IMR-90 (cell line): ENCODE measurements at regions of chr5 and their contacts with region 1.

Region 1: DNA sequence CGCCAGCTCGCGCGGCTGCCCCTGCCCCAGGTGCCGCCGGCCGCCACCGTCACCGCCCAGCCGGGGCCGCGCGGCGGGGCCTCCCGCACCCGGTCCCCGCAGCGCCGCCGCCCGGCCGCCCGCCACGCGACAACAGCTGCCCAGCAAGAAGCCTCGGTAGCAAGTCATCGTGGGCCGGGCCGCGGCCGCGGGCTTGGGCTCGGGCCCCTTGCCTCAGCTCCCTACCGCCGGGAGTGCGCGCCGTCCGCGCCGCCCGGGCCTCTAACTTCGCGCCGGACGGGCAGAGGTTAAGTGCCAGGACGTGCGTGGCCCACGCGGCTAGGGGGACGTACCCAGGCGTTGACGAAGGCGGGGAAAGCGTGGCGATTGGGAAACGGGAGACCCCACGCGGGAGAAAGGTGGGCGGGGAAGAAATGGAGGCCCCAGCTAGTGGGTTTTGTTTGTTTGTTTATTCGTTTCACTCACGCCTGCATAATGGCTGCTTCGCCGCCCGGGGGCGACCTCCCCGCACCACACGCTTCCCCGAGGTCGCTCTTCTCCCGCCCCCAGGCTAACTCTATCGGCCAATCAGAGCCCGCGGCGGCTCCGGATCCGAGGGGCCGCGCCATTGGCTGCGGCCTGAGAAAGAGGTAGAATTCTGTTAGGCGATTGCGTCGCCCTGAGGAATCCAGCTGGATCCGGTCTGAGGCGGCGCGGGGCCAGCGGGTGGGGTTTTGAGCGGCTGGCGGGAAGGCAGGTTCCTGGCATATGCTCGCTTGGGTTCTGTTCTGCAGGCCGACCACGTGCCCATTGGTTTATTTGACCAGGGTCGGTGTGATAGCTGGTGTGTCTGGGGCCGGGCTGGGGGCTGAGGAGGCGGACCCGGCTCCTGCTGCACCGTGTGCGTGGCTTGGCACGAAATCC is at the start of gene NADK2:
- DNase-seq: peak; percentile 92
- ATAC-seq: peak; percentile 86
- H3K4me3 ChIP-seq: peak within 1 kb of the TSS; percentile 85
- H3K27ac ChIP-seq: peak within 1 kb of the TSS; percentile 91
- H3K4me1 ChIP-seq: peaks cover 4% of the 10 kb centered on the region
- H3K27me3 ChIP-seq: no peaks in the 10 kb centered on the region
- CTCF ChIP-seq: peak; percentile 65
- POLR2A ChIP-seq: peak; percentile 81
- RAD21 ChIP-seq: peak; percentile 31; the same call in 1 of the 2 replicates
- total RNA-seq, gene NADK2: 17.4 and 21.1 TPM in 2 replicates

Region 2: DNA sequence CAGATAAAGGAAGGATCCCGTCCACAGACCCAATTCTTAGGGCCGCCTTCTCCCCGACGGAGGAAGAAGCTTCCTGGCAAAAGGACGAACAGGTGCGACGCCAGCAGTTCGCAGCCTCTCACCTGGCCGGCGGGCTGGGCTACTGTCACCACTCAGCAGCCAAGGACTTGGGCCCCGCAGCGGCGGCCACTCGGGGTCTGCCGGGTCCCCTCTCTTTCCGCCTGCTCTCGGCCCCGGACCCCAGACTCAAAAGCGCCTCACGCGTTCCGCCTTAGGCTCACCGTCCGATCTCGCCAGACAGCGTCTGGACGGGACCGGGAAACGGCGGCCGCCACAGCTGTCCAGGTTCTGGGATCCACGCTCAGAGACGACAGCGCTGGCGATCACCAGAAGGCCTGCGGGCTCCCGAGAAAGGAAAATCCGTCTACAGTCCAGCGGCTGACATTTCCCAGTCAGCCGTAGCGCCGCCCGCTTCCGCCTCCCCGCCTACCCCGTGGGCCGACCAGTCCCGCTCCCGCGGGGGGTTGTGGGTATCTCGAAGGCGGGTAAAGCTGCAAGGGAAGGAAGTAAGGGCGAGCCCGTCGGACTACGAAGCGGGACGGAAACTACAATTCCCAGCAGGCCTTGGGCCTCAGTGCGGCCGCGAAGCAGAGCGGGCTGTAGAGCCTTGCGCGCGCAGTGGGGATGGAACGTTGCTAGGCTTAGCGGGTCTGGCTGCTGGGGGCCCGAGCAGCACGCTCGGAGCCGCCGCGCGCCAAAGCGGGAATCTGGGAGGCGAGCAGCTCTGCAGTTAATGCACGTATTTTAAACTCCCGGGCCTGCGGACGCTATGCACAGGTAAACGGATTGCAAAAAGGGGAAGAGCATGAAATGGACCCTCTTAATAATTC is 90.2 kb before region 1 on chr5 and contains the starts of genes LMBRD2 and SKP2:
- CTCF ChIA-PET with region 1: interaction called, 3 read pairs
- POLR2A ChIA-PET with region 1: no interaction called
- dilution Hi-C with region 1: no loop called
- in situ Hi-C with region 1: no loop called
- intact Hi-C with region 1: loop called (anchors 2 kb)
- DNase-seq: peak; percentile 98
- ATAC-seq: peak; percentile 94
- H3K4me3 ChIP-seq: peak within 1 kb of the TSS; percentile 79
- H3K27ac ChIP-seq: peak within 1 kb of the TSS; percentile 87
- H3K4me1 ChIP-seq: peaks cover 14% of the 10 kb centered on the region
- H3K27me3 ChIP-seq: no peaks in the 10 kb centered on the region
- CTCF ChIP-seq: no peak
- POLR2A ChIP-seq: peak; percentile 28; the same call in 1 of the 2 replicates
- RAD21 ChIP-seq: no peak
- total RNA-seq, gene LMBRD2: 5.2 and 11.4 TPM in 2 replicates
- total RNA-seq, gene SKP2: 72.5 and 92.1 TPM in 2 replicates

Region 3: DNA sequence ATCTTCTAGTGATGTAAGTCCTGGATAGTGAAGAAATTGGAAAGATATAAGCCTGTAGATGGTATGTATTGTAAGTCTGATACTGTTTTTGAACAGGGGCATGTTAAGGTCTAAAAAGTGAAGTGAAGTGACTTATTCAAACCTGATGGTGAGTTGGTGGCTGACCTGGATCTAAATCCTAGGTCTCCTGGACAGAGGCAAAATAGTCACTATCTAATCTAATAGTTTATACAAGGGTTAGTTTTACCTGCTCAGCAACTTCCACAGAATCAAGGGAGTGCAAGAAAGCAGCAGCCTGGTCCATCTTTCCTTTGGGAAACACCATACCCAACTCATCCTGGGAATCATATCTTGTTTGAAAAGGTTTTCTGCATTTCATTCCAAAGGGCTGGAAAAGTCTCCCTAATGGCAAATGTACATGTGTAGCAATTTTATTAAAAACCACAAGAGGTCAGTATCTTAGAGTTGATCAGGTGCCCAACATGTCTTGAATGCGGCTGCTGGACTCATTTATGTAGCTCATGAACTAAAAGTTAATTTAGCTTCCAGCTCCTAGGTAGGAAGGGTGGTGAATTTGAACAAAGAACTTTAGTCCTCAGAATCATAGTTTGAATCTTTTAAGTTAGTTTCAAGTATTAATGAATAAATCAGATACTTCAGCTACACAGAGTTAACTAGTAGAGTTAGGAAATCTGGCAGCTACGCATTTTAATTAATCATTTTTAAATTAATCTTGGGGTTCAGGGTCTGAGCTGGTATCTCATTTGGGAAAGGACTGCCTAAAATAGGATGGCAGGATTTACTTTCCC is 64.0 kb before region 1 on chr5:
- CTCF ChIA-PET with region 1: no interaction called
- POLR2A ChIA-PET with region 1: no interaction called
- dilution Hi-C with region 1: no loop called
- in situ Hi-C with region 1: no loop called
- intact Hi-C with region 1: loop called (anchors 1 kb)
- DNase-seq: peak; percentile 65
- ATAC-seq: peak; percentile 77
- H3K4me3 ChIP-seq: no peak overlapping the region
- H3K27ac ChIP-seq: no peak overlapping the region
- H3K4me1 ChIP-seq: 0 out of 2 replicates have a peak, but pooled peaks cover 5% of the 10 kb centered on the region
- H3K27me3 ChIP-seq: no peaks in the 10 kb centered on the region
- CTCF ChIP-seq: peak; percentile 63
- POLR2A ChIP-seq: no peak
- RAD21 ChIP-seq: peak; percentile 63

Region 4: GRCh38 chr5:36202521-36202961 is 39.3 kb before region 1 on chr5:
- CTCF ChIA-PET with region 1: no interaction called
- POLR2A ChIA-PET with region 1: interaction called, 9 read pairs
- dilution Hi-C with region 1: no loop called
- in situ Hi-C with region 1: no loop called
- intact Hi-C with region 1: loop called (anchors 2 kb)
- DNase-seq: peak; percentile 54
- ATAC-seq: peak; percentile 80
- H3K4me3 ChIP-seq: no peak overlapping the region
- H3K27ac ChIP-seq: no peak overlapping the region
- H3K4me1 ChIP-seq: peaks cover 2% of the 10 kb centered on the region
- H3K27me3 ChIP-seq: no peaks in the 10 kb centered on the region
- CTCF ChIP-seq: no peak
- POLR2A ChIP-seq: no peak
- RAD21 ChIP-seq: no peak

Region 5: GRCh38 chr5:36252722-36253365 is 11.0 kb after region 1 on chr5:
- CTCF ChIA-PET with region 1: interaction called, 13 read pairs
- POLR2A ChIA-PET with region 1: no interaction called
- dilution Hi-C with region 1: no loop called
- in situ Hi-C with region 1: no loop called
- intact Hi-C with region 1: no loop called
- DNase-seq: no peak
- ATAC-seq: no peak
- H3K4me3 ChIP-seq: no peak overlapping the region
- H3K27ac ChIP-seq: no peak overlapping the region
- H3K4me1 ChIP-seq: no peaks in the 10 kb centered on the region
- H3K27me3 ChIP-seq: no peaks in the 10 kb centered on the region
- CTCF ChIP-seq: no peak
- POLR2A ChIP-seq: no peak
- RAD21 ChIP-seq: no peak